ENCODE measurements at regions of chrX and their contacts with region 1.

Region 1: DNA sequence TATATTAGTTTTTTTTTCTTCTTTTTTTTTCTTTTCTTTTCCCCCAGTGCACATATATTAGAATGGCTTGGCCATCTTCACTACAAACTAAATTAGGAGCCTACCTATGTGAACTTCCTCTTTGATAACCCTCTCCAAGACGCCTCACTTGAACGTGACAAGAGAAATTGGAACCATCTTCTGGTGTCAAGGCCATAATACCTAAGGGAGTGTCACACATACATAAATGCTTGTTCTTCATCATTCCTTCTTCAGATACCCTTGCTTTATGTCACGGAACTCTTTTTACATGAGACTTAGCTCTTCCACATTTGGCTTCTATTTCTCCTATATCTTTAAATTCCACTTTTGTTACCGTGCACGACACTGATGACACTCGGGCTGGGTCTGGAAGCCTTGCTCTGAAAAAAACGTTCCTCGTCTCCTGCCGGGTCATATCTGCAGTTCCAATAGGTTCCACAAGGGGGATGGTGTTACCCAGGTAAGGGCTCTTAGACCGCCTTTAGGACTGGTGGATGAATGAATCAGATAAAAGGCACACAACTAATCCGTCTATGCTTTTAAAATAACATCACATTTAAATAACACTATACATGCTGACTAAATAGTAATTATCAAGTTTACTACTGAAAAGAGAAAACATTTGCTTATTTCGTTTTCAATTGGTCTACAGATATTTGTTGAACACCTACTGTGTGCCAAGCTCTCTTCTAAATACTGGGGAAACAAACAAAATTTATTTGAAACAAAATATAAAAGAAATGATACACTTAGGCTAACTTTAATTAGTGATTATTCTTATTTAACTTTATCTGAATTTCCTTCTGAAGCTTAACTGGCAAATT is 19.9 kb downstream of the DGAT2L6 start:
- DNase-seq: peak in 2 of 3 donors; percentile 23 to 81
- ATAC-seq: peak; percentile 86
- H3K4me3 ChIP-seq: no peak overlapping the region
- H3K4me1 ChIP-seq: no peaks in the 10 kb centered on the region
- CTCF ChIP-seq: peak; percentile 27

Region 2: DNA sequence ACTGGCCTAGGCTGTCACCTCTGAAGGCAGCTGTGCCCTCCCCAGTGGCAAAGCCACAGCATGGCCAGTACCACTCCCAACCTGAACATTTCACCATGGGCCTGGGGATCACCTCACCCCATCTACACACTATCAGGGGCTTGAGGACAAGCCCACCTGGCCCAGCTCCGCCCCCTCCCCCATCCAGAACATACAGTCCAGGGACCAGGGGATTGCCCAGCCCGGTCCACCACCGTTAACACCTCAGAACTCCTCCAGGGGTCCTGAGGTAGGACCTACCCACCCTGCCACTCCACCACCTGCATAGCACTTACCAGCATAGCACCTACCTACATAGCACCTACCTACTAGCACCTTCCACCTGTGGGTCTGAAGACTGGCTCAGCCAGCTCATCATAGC is 401.5 kb before region 1 on chrX:
- intact Hi-C with region 1: no loop called
- DNase-seq: no peak
- ATAC-seq: no peak
- H3K4me3 ChIP-seq: no peak overlapping the region
- H3K4me1 ChIP-seq: no peaks in the 10 kb centered on the region
- CTCF ChIP-seq: no peak

Region 3: DNA sequence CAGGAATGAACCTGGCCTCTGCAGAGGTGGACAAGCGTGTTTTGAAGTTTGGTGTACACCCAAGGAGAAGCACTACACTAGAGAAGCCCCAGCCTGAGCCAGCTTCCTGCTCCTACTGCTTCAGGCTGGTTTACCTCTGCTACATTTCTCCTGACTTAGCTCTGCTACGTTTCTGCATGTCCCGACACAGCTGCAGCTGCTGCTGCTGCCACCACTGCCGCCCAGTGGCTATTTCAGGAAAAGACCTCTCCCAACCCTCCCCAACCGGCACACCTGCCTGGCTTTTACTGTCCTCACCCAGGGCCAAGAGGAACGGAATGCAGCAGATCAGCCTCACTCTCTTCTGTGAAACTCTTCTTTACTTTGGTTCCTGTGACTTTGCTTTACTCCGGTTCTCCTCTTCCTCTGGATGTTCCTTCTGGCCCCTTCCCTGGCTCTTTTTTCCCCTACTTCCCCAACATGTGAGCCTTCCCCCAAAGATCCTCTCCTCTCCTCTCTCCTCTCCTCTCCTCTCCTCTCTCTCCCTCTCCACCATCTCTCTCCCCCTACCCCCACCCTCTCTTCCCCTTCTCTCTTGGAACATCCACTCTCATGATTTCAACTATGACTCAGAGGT is 65.9 kb after region 1 on chrX:
- intact Hi-C with region 1: loop called in 1 of 2 experiments (anchors 10 kb)
- DNase-seq: peak; percentile 47 to 69 (median 67)
- ATAC-seq: peak; percentile 93
- H3K4me3 ChIP-seq: no peak overlapping the region
- H3K4me1 ChIP-seq: no peaks in the 10 kb centered on the region
- CTCF ChIP-seq: no peak